Heart right ventricle (tissue), 16 donors: ENCODE measurements at regions of chr16 and their contacts with region 1.

Region 1: GRCh38 chr16:31833047-31833446 is 40.6 kb upstream of the ZNF267 start:
- DNase-seq: no peak
- ATAC-seq: no peak
- H3K4me3 ChIP-seq: no peak overlapping the region
- H3K27ac ChIP-seq: no peak overlapping the region
- H3K4me1 ChIP-seq: no peaks in the 10 kb centered on the region
- H3K27me3 ChIP-seq: no peaks in the 10 kb centered on the region
- CTCF ChIP-seq: no peak

Region 2: DNA sequence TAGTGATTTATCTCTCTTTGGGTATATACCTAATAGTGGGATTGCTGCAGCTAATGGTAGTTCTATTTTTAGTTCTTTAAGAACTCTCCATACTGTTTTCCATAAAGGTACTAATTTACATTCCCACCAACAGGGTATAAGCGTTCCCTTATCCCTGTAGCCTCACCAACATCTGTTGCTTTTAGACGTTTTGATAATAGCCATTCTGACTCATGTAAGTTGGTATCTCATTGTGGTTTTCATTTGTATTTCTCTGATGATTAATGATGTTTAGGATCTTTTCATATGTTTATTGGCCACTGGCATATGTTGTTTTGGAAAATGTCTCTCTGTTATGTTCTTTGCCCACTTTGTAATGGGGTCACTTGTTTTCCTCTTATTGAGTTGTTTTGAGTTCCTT is 47.9 kb before region 1 on chr16:
- intact Hi-C with region 1: loop called in 1 of 10 experiments (anchors 10 kb)
- DNase-seq: no peak
- ATAC-seq: no peak
- H3K4me3 ChIP-seq: no peak overlapping the region
- H3K27ac ChIP-seq: no peak overlapping the region
- H3K4me1 ChIP-seq: no peaks in the 10 kb centered on the region
- H3K27me3 ChIP-seq: no peaks in the 10 kb centered on the region
- CTCF ChIP-seq: no peak